A549 (cell line): ENCODE measurements at regions of chr9 and their contacts with region 1.

Region 1: DNA sequence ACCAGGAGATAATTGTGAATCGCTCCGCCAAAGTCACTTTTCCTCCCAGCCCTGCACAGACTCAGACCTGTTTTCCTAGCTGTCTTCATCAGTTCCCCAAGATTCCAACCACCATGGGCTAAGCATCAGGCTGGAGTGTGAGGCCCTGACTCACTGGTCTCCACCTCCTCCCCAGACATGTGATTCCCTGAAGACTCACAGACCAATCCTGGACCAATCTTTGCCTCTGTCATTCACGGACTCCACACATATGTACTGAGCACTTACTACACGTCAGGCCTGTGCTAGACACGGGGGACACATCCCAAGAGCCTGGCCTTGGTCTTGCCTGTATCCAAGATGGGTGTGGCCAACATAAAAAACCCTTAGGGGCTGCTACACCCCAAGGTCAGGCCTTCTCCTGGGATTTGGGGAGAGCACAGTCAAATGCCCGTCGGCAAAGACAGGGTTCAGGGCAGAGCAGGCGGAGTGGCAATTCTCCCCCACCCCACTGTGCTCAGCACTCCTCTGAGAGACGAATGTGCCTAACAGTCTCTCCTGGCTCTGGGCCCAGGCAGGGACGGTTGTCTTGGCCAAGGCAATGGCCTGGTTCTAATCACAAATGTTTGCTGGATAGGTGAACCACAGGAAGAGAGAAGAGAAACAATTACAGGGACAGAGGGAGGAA is 11.9 kb downstream of the EEIG1 start:
- DNase-seq: peak; percentile 67 to 75
- ATAC-seq: peak; percentile 52 to 66; a peak in 5 of 6 replicates
- H3K4me3 ChIP-seq: 0 out of 3 replicates have a peak overlapping the region, but pooled peaks have one; percentile 11
- H3K27ac ChIP-seq: peak overlapping the region; percentile 89 to 98
- H3K4me1 ChIP-seq: peaks cover 99% of the 10 kb centered on the region
- CTCF ChIP-seq: no peak
- EP300 ChIP-seq: no peak
- POLR2A ChIP-seq: no peak
- RAD21 ChIP-seq: no peak

Region 2: GRCh38 chr9:127715394-127716337 is 253.2 kb before region 1 on chr9 and contains the starts of genes PTRH1 and TTC16:
- CTCF ChIA-PET with region 1: no interaction called
- POLR2A ChIA-PET with region 1: no interaction called
- DNase-seq: peak; percentile 96 to 97
- ATAC-seq: peak; percentile 92 to 95
- H3K4me3 ChIP-seq: peak within 1 kb of the TSS; percentile 68
- H3K27ac ChIP-seq: peak within 1 kb of the TSS; percentile 73 to 79
- H3K4me1 ChIP-seq: peaks cover 17% of the 10 kb centered on the region
- CTCF ChIP-seq: no peak
- EP300 ChIP-seq: no peak
- POLR2A ChIP-seq: no peak; the same call in 1 of the 2 replicates
- RAD21 ChIP-seq: no peak
- polyA plus RNA-seq, gene PTRH1: 3.5 and 5.1 TPM in 2 replicates
- polyA plus RNA-seq, gene TTC16: 0.03 TPM in 1 of 2 replicates, not detected in the other

Region 3: DNA sequence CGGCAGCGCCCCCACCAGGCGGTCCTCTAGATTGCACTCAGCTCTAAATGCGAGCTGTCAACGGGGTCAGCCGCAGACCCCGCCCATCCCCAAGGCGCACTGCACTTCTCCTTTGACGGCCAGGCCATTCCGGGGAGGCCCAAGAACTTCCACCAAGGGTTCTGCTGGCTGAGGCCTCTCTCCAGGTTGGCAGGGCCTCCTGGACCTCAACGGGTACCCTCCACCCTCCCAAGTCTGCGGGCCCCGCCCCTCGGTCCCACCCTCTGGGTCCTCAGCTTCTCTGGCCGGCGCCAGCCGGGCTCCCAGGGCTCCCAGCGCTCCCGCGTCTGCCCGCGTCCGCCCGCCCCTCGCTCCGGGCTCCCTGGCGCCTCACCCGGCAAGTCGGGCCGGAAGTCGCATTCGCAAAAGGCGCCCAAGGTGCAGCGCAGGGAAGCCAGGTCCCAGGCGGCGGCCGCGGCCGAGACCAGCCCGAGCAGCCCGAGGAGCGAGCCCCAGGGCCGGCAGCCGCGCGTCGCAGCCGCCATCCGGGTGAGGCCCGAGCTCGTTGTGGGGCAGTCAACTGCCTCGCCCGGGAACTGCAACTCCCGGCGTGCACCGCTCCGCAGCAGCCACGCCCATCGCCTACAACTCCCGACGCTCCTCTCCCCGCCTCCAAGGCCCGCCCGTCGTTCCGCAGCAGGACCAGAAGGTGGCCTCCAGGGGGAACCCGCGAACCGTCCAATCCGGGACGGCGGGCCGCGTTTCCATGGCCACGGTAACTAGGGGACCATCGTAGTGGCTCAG is 233.9 kb before region 1 on chr9 and contains the start of gene TOR2A:
- CTCF ChIA-PET with region 1: no interaction called
- POLR2A ChIA-PET with region 1: no interaction called
- DNase-seq: peak; percentile 91 to 97
- ATAC-seq: peak; percentile 92 to 95
- H3K4me3 ChIP-seq: peak within 1 kb of the TSS; percentile 72
- H3K27ac ChIP-seq: peak within 1 kb of the TSS; percentile 96
- H3K4me1 ChIP-seq: peaks cover 12% of the 10 kb centered on the region
- CTCF ChIP-seq: peak; percentile 90
- EP300 ChIP-seq: no peak; a peak in 1 of 5 replicates
- POLR2A ChIP-seq: peak; percentile 78
- RAD21 ChIP-seq: peak; percentile 98
- polyA plus RNA-seq, gene TOR2A: 4.9 and 5.5 TPM in 2 replicates

Region 4: GRCh38 chr9:127955294-127956035 is 13.4 kb before region 1 on chr9:
- CTCF ChIA-PET with region 1: interaction called, 365 read pairs
- POLR2A ChIA-PET with region 1: interaction called, 4 read pairs
- DNase-seq: peak; percentile 89 to 99
- ATAC-seq: peak; percentile 91 to 92
- H3K4me3 ChIP-seq: peak overlapping the region; percentile 12; the same call in 1 of the 3 replicates
- H3K27ac ChIP-seq: peak overlapping the region; percentile 75 to 84
- H3K4me1 ChIP-seq: peaks cover 61% of the 10 kb centered on the region
- CTCF ChIP-seq: 0 out of 3 replicates have a peak, but pooled peaks have one; percentile 15
- EP300 ChIP-seq: no peak; a peak in 1 of 5 replicates
- POLR2A ChIP-seq: no peak
- RAD21 ChIP-seq: peak; percentile 37 to 42; a peak in 2 of 5 replicates

Region 5: DNA sequence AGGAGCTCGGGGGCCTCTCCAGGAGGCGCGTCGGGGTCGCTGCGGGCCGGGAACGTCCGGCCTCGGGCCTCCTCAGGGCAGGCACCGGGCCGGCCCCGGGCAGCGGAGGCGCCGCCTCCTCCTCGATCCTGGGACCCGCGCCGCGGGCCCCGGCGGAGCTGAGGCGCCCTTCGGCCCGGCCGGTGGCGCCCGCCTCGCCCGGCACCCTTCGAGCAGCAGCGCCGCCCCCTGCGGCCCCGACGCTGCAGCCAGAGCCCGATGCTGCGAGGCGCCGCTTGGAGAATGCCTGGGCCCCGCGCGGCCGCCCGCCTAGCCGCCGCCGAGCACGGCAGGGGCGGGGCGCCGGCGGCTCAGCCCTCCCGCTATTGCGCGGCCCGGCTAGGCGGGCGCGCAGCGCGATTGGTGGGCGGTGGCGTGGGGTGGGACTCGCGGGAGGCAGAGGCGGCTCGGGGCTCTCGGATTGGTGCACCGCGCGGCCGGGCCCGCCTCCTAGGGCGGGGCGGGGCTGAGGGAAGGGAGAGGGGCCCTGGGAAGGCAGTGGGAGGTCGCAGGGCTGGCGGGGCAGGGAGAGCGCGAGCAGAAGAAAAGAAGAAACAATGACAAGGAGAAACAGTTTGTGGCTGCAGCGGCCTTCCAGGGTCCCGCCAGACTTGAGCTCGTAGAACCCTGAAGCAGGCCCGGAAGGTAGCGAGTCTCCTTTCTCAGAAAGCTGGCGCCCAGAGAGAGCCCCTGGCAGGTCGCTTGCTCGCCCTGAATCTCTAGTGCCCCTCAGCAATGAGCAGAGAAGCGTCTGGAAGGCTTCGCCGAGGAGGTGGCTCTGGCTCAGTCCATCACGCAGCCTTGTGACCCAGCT is 12.1 kb after region 1 on chr9 and contains the start of gene EEIG1:
- CTCF ChIA-PET with region 1: interaction called, 9 read pairs
- POLR2A ChIA-PET with region 1: interaction called, 10 read pairs
- DNase-seq: peak; percentile 85 to 88
- ATAC-seq: peak; percentile 85 to 94
- H3K4me3 ChIP-seq: peak within 1 kb of the TSS; percentile 91
- H3K27ac ChIP-seq: peak within 1 kb of the TSS; percentile 97 to 98
- H3K4me1 ChIP-seq: peaks cover 44% of the 10 kb centered on the region
- CTCF ChIP-seq: no peak
- EP300 ChIP-seq: no peak
- POLR2A ChIP-seq: peak; percentile 78
- RAD21 ChIP-seq: peak in 1 of 2 experiments; percentile 10; a peak in 1 of 5 replicates
- polyA plus RNA-seq, gene EEIG1: 24.4 and 30.3 TPM in 2 replicates

Region 6: GRCh38 chr9:127987103-127987614 is 18.3 kb after region 1 on chr9:
- CTCF ChIA-PET with region 1: no interaction called
- POLR2A ChIA-PET with region 1: interaction called, 10 read pairs
- DNase-seq: peak; percentile 81 to 88
- ATAC-seq: peak; percentile 87 to 92
- H3K4me3 ChIP-seq: no peak overlapping the region
- H3K27ac ChIP-seq: peak overlapping the region; percentile 83 to 86
- H3K4me1 ChIP-seq: peaks cover 45% of the 10 kb centered on the region
- CTCF ChIP-seq: no peak
- EP300 ChIP-seq: peak; percentile 37 to 51; a peak in 2 of 5 replicates
- POLR2A ChIP-seq: no peak
- RAD21 ChIP-seq: no peak